ENCODE measurements at regions of chr9 and their contacts with region 1.

Region 1: GRCh38 chr9:99140685-99141314 is 35.9 kb downstream of the TGFBR1 start:
- DNase-seq: no peak
- ATAC-seq: peak; percentile 72
- H3K4me3 ChIP-seq: no peak overlapping the region
- H3K27ac ChIP-seq: no peak overlapping the region
- H3K4me1 ChIP-seq: no peaks in the 10 kb centered on the region
- H3K27me3 ChIP-seq: no peaks in the 10 kb centered on the region

Region 2: GRCh38 chr9:98848450-98849149 is 292.2 kb before region 1 on chr9:
- intact Hi-C with region 1: loop called in 1 of 2 experiments (anchors 10 kb)
- DNase-seq: peak; percentile 94 to 97
- ATAC-seq: peak; percentile 97
- H3K4me3 ChIP-seq: peak overlapping the region; percentile 25 to 58
- H3K27ac ChIP-seq: no peak overlapping the region
- H3K4me1 ChIP-seq: no peaks in the 10 kb centered on the region
- H3K27me3 ChIP-seq: no peaks in the 10 kb centered on the region

Region 3: DNA sequence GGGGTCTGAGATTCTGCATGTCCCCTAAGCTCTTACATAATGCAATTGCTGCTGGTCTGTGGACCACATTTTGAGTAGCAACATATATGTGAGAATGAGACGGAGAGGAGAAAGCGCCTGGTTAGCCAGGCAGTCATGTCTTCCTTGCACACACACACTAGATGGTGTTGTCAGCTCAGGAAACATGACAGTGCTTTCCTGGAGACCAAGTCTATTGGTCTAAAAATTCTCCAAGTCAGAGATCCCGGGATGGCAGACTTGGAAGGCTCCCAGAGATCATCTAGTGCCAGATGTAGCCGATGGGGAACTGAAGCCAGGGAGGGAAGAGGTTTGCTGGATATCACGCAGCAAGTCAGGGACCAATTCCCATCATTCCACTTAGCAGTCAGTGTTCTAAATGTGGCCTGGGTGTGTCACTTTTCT is 279.9 kb before region 1 on chr9:
- intact Hi-C with region 1: loop called (anchors 5 to 10 kb)
- DNase-seq: peak in 1 of 2 donors; percentile 74
- ATAC-seq: peak; percentile 79
- H3K4me3 ChIP-seq: no peak overlapping the region
- H3K27ac ChIP-seq: no peak overlapping the region
- H3K4me1 ChIP-seq: no peaks in the 10 kb centered on the region
- H3K27me3 ChIP-seq: no peaks in the 10 kb centered on the region